Endothelial cell of umbilical vein (primary cell): ENCODE measurements at regions of chr3 and their contacts with region 1.

Region 1: DNA sequence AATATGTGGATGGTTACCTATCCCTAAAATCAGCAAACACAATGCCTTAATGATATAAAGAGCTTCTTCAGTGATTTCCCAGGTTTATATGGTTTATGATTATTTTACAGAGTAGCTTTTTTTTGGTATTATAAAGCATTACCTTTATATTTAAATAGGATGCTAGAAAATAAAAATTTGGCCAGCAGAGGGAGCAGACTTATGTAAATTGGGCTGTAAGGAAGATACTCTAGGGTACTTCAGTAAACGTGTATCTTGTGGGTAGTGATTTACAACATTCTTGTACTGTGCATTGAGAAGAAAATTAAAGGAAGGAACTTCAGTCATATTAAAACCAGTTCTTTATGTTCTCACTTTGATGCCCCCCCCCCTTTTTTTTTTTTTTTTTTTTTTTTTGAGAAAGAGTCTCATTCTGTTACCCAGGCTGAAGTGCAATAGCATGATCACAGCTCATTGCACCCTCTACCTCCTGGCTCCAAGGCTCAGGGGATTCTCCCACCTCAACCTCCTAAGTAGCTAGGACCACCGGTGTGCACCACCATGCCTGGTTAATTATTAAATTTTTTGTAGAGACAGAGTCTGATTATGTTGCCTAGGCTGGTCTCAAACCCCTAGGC is 167.9 kb downstream of the BBX start:
- DNase-seq: peak; percentile 51
- H3K4me3 ChIP-seq: no peak overlapping the region
- H3K27ac ChIP-seq: no peak overlapping the region
- H3K4me1 ChIP-seq: no peaks in the 10 kb centered on the region
- H3K27me3 ChIP-seq: no peaks in the 10 kb centered on the region
- CTCF ChIP-seq: peak; percentile 25 to 27
- POLR2A ChIP-seq: no peak

Region 2: GRCh38 chr3:107531917-107532469 is 158.6 kb before region 1 on chr3:
- CTCF ChIA-PET with region 1: no interaction called
- POLR2A ChIA-PET with region 1: no interaction called
- dilution Hi-C with region 1: no loop called
- intact Hi-C with region 1: no loop called
- DNase-seq: no peak
- H3K4me3 ChIP-seq: no peak overlapping the region
- H3K27ac ChIP-seq: no peak overlapping the region
- H3K4me1 ChIP-seq: no peaks in the 10 kb centered on the region
- H3K27me3 ChIP-seq: no peaks in the 10 kb centered on the region
- CTCF ChIP-seq: no peak
- POLR2A ChIP-seq: no peak

Region 3: DNA sequence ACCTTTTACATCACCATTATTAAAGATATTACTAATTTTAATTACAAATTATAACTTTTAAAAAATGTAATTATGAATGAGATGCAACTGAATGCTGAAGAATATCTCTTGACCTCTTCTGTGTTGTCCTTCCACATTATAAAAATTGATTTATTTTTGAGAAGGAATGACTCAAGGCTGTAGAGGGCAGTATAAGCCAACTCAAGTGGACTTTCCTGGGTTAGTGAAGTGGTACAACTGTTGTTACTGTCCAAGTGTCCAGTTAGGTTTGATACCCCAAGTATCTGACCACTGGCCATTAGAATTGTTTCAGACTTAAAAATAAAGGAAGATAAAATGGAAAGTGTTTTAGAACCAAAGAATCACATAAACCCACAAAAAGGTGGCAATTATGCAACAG is 116.0 kb before region 1 on chr3:
- CTCF ChIA-PET with region 1: interaction called, 13 read pairs
- POLR2A ChIA-PET with region 1: no interaction called
- dilution Hi-C with region 1: no loop called
- intact Hi-C with region 1: no loop called
- DNase-seq: peak; percentile 66
- H3K4me3 ChIP-seq: no peak overlapping the region
- H3K27ac ChIP-seq: no peak overlapping the region
- H3K4me1 ChIP-seq: no peaks in the 10 kb centered on the region
- H3K27me3 ChIP-seq: no peaks in the 10 kb centered on the region
- CTCF ChIP-seq: peak; percentile 33 to 46
- POLR2A ChIP-seq: no peak

Region 4: GRCh38 chr3:107710851-107711250 is 20.2 kb after region 1 on chr3:
- CTCF ChIA-PET with region 1: interaction called, 17 read pairs
- POLR2A ChIA-PET with region 1: no interaction called
- dilution Hi-C with region 1: no loop called
- intact Hi-C with region 1: no loop called
- DNase-seq: peak; percentile 81
- H3K4me3 ChIP-seq: no peak overlapping the region
- H3K27ac ChIP-seq: no peak overlapping the region
- H3K4me1 ChIP-seq: peaks cover 11% of the 10 kb centered on the region
- H3K27me3 ChIP-seq: no peaks in the 10 kb centered on the region
- CTCF ChIP-seq: no peak
- POLR2A ChIP-seq: no peak

Region 5: GRCh38 chr3:107740992-107741896 is 50.6 kb after region 1 on chr3:
- CTCF ChIA-PET with region 1: interaction called, 142 read pairs
- POLR2A ChIA-PET with region 1: no interaction called
- dilution Hi-C with region 1: no loop called
- intact Hi-C with region 1: loop called (anchors 1 kb)
- DNase-seq: peak; percentile 59
- H3K4me3 ChIP-seq: no peak overlapping the region
- H3K27ac ChIP-seq: no peak overlapping the region
- H3K4me1 ChIP-seq: no peaks in the 10 kb centered on the region
- H3K27me3 ChIP-seq: no peaks in the 10 kb centered on the region
- CTCF ChIP-seq: peak in 1 of 2 donors; percentile 25
- POLR2A ChIP-seq: no peak

Region 6: DNA sequence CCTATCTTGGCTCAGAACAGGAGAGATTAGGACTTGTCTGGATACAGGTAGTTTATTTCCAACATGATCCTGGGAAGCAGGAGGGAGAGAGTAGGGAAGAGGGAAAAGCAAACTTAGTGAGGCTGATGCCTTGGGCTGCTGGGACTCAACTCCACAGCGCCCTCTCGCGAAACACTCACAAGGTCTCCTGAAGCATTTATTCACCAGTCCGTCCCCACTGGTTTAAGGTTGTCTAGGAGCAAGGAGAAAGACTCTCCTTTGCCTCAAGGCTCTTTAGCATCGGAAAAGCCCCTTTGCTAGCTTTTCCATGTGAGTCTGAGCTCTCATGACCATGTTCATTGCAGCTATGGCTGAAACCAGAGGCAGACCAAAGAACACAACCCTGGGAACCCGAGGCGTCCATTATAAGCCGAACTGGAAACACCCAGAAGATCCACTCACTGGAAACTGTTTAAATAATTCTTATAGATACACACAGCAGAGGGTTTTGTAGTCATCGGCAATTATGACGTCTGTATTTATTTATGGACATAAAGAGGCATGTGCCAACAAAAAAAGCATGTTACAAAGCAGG is 155.7 kb after region 1 on chr3:
- CTCF ChIA-PET with region 1: interaction called, 12 read pairs
- POLR2A ChIA-PET with region 1: no interaction called
- dilution Hi-C with region 1: no loop called
- intact Hi-C with region 1: no loop called
- DNase-seq: peak; percentile 64
- H3K4me3 ChIP-seq: no peak overlapping the region
- H3K27ac ChIP-seq: no peak overlapping the region
- H3K4me1 ChIP-seq: no peaks in the 10 kb centered on the region
- H3K27me3 ChIP-seq: peaks cover 4% of the 10 kb centered on the region in 2 experiments
- CTCF ChIP-seq: peak; percentile 54 to 79
- POLR2A ChIP-seq: no peak